ENCODE measurements at regions of chr10 and their contacts with region 1.

Region 1: GRCh38 chr10:11113156-11113555 is 95.5 kb downstream of the CELF2 start:
- DNase-seq: peak; percentile 38
- H3K4me3 Mint-ChIP-seq: no peak overlapping the region
- H3K27ac Mint-ChIP-seq: no peak overlapping the region
- H3K4me1 Mint-ChIP-seq: peaks cover 27% of the 10 kb centered on the region
- H3K27me3 Mint-ChIP-seq: no peaks in the 10 kb centered on the region

Region 2: DNA sequence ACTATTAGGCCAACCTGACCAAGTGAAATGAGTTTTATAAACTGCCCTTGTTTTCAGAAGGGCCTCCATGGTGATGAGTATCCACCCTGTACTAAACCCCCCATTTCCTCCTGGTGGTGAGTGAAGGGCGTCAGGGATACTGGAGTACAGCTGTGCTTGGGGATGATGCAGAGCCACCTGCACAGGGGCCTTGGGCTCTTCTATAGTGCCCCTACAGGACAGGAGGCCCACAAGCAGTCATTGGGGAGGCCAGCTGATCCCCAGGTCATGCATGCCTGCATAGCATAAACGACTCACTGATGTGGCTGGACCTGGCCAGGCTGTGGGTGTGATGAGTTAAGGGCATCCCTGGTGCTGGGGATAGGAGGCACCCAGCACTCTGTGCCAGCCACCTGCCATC is 209.5 kb before region 1 on chr10:
- CTCF ChIA-PET with region 1: no interaction called
- DNase-seq: no peak
- H3K4me3 Mint-ChIP-seq: no peak overlapping the region
- H3K27ac Mint-ChIP-seq: no peak overlapping the region
- H3K4me1 Mint-ChIP-seq: no peaks in the 10 kb centered on the region
- H3K27me3 Mint-ChIP-seq: no peaks in the 10 kb centered on the region

Region 3: DNA sequence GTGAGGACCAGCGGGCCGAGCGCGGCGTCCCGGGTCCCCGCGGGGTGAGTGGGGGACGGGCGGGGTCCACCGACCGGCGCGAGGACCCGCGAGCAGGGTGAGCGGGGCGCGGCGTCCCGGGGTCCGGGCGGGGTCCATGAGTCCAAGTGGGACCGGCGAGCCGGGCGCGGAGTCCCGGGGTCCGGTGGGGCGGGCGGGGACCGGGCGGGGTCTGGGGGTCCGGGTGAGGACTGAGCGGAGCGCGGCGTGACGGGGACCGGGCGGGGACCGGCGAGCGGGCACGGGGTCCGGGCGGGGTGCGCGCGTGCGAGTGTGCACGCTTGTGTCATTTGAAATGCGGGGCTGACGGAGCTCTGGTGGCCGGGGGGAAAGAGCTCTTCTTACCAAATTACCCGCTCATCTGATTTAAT is 94.7 kb before region 1 on chr10:
- CTCF ChIA-PET with region 1: no interaction called
- DNase-seq: peak; percentile 23
- H3K4me3 Mint-ChIP-seq: peak overlapping the region; percentile 75
- H3K27ac Mint-ChIP-seq: no peak overlapping the region
- H3K4me1 Mint-ChIP-seq: peaks cover 12% of the 10 kb centered on the region
- H3K27me3 Mint-ChIP-seq: peaks cover 62% of the 10 kb centered on the region

Region 4: DNA sequence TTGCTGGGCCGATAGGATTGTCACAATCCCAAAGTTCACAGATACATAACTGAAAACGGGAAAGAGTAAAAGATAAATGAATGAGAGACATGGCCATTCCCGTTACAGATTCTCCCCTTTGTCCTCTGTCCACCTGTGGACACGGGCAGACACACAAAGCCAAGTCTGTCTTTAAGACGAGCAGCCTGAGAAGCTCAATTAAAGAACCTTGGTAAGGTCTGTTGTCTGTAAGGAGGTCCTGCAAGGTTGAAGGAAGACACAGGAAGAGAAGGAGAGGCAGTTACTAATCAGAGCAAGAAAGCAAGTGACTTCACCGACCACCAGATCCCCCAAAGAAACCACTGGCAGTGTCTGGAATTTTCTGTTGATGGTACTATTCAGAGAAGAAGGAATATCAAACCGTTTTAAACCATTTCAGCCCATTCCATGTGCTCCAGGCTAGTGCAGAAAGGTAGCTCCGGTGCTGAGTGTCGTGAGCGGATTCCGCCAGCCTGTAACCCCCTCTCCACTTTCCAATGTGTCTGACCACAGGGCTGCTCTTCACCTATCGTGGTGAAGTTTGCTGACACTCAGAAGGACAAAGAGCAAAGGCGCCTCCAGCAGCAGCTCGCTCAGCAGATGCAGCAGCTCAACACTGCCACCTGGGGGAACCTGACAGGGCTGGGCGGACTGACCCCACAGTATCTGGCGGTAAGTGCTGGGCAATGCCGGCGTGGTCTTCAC is 157.1 kb after region 1 on chr10:
- CTCF ChIA-PET with region 1: interaction called, 15 read pairs
- DNase-seq: peak; percentile 69
- H3K4me3 Mint-ChIP-seq: no peak overlapping the region
- H3K27ac Mint-ChIP-seq: peak overlapping the region; percentile 62
- H3K4me1 Mint-ChIP-seq: peaks cover 32% of the 10 kb centered on the region
- H3K27me3 Mint-ChIP-seq: no peaks in the 10 kb centered on the region